ENCODE measurements at regions of chr22 and their contacts with region 1.

Region 1: DNA sequence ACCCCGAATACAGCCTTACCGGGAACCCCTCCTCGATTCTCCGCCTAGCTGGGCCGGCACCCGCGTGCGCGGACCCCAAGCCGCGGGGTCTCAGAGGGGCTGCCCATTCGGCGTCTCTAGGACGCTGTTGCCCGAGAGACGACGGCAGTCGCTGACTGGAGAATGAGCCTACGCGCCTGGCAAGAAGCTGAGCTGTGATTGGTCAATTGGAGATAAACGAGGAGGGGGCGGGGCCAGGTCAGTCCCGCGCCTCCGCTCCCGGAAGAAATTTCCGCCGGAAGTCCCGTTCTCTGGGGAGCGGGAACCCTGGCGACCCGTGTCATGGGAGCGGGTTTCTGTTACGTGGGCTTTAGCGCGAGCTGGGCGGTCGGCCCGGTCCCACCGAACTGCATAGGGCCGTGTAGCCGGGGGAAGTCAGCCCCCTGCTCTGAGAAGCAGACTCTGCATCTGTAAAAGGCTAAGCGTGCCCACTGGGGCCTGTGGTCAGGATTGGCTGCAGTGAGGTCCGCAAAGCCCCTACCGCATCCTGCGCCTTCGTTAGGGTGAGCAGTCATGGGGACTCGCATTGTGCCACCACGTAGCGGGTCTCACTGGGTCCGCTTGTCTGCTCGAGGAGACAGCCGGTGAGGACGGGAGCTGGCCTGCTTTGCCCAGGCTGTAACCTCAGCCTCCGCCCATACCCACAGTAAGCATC is at the start of gene EFCAB6:
- H3K4me3 Mint-ChIP-seq: peak within 1 kb of the TSS; percentile 90
- H3K27ac Mint-ChIP-seq: peak within 1 kb of the TSS; percentile 91
- H3K4me1 Mint-ChIP-seq: peaks cover 22% of the 10 kb centered on the region
- H3K27me3 Mint-ChIP-seq: peaks cover 2% of the 10 kb centered on the region

Region 2: GRCh38 chr22:43955040-43955882 is 143.0 kb after region 1 on chr22 and contains the start of gene SAMM50:
- intact Hi-C with region 1: loop called (anchors 5 kb)
- H3K4me3 Mint-ChIP-seq: peak within 1 kb of the TSS; percentile 93
- H3K27ac Mint-ChIP-seq: peak within 1 kb of the TSS; percentile 91
- H3K4me1 Mint-ChIP-seq: peaks cover 33% of the 10 kb centered on the region
- H3K27me3 Mint-ChIP-seq: peaks cover 9% of the 10 kb centered on the region

Measured in dendritic cell treated with granulocyte-macrophage colony-stimulating factor and Interleukin-4, amounts not matched to agents 40 ng/mL and 50 ng/mL, for 4 days (primary cell).